Sigmoid colon (tissue), 7 donors: ENCODE measurements at regions of chr10 and their contacts with region 1.

Region 1: GRCh38 chr10:79981450-79982361 is 32.8 kb upstream of the SFTPD start:
- DNase-seq: peak; percentile 73
- H3K4me3 ChIP-seq: peak overlapping the region; percentile 45 to 80 (median 60)
- H3K27ac ChIP-seq: peak overlapping the region; percentile 22 to 86 (median 80)
- H3K4me1 ChIP-seq: peaks cover 0 to 19% (median 12%) of the 10 kb centered on the region in 4 donors
- H3K27me3 ChIP-seq: peaks cover 0 to 11% (median 5%) of the 10 kb centered on the region in 3 donors
- CTCF ChIP-seq: no peak
- EP300 ChIP-seq: no peak
- POLR2A ChIP-seq: no peak

Region 2: GRCh38 chr10:80078448-80079311 is 97.0 kb after region 1 on chr10 and contains the start of gene TMEM254:
- intact Hi-C with region 1: loop called (anchors 2 kb)
- DNase-seq: peak; percentile 96
- H3K4me3 ChIP-seq: peak within 1 kb of the TSS; percentile 70 to 87 (median 78)
- H3K27ac ChIP-seq: peak within 1 kb of the TSS; percentile 94 to 96 (median 96)
- H3K4me1 ChIP-seq: peaks cover 0 to 16% (median 12%) of the 10 kb centered on the region in 4 donors
- H3K27me3 ChIP-seq: no peaks in the 10 kb centered on the region
- CTCF ChIP-seq: no peak
- EP300 ChIP-seq: no peak
- POLR2A ChIP-seq: peak in 1 of 2 donors; percentile 5
- total RNA-seq, gene TMEM254: 11.4 to 18.0 (median 11.5) TPM